SK-N-SH (cell line): ENCODE measurements at regions of chr18 and their contacts with region 1.

Region 1: DNA sequence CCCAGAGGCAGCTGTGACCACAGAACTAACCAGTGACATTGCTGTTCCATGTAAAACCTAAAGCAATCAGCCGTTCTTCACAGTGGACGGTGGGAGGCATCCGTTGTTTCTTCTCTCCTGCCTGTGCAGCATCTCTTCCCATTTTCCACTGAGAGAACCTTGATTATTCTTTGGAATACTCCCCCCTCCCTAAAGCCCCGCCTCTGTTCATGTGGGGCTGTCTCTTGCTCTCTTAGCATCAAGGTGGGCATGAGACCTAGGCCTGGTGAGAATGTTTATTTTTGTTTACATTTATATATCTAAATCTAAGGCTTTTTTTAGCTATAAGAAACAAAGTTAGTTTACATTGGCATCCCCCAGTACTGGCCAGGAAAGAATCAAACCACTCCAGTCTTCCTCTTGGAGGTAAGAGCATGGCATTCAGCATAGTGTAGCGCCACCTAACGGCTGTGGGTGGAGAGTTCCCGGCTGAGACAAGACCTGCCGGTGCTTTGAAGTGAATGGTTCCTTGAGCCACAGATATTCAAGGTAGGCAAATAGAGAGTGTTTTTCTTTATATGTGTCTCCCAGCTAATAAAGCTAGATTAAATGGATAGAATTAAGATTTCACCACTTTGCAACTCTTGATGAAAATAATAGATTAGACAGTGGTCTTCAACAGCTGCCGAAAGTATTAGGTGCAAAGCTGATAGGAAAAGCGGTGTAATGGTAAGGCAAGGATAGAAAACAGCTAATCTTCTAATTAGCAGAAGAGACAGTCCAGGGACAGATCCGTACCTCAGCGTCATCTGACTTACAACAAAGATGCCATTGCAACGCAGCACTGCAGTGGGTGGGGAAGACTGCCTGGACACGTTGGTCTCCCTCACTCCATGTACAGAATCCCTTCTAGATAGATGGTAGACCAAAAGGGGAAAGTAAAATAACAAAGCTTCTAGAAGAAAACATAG is 219.6 kb upstream of the RAB12 start:
- DNase-seq: peak; percentile 72
- H3K4me3 ChIP-seq: peak overlapping the region in 1 of 2 experiments; percentile 47; a peak in 1 of 4 replicates
- H3K27ac ChIP-seq: peak overlapping the region in 1 of 2 experiments; percentile 50; a peak in 1 of 4 replicates
- H3K4me1 ChIP-seq: peaks cover 0 to 6% of the 10 kb centered on the region in 2 experiments; a peak in 1 of 4 replicates
- H3K27me3 ChIP-seq: no peaks in the 10 kb centered on the region
- CTCF ChIP-seq: peak; percentile 81
- EP300 ChIP-seq: no peak
- RAD21 ChIP-seq: peak; percentile 92

Region 2: DNA sequence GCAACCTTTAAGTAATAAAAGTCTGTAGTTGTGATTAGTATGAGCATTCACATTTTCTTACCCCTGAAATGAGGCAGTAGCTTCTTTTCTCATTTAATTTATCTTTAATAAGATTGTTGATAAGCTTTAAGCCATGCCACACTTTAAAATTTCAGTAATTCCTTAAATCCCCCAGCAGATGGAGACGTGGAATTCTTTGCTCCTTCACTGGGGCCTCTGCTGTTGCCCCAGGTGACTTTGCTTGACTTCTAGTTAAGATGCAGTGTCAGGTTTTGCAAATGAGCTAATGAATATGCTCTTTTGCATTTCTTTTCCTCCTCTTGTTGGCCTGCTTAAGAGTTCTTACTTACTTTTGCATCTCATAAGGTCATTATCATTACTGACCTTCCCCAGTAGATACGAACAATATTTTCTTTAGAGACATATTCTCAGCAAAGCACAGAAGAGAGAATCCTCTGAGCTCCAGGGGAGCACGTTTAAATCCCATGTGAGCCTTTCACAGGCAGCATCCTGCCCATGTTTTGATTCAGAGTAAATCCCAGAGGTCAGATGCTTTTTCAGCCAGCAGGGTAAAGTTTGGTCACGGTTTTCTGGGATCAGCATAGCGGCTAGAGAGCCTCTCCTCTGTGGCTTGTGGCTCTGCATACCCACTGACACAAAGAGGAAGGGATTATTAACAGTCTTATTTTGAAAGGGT is 599.7 kb before region 1 on chr18:
- CTCF ChIA-PET with region 1: interaction called, 11 read pairs
- POLR2A ChIA-PET with region 1: no interaction called
- DNase-seq: peak; percentile 33
- H3K4me3 ChIP-seq: no peak overlapping the region; a peak in 1 of 4 replicates
- H3K27ac ChIP-seq: no peak overlapping the region
- H3K4me1 ChIP-seq: peaks cover 0 to 3% of the 10 kb centered on the region in 2 experiments; a peak in 1 of 4 replicates
- H3K27me3 ChIP-seq: no peaks in the 10 kb centered on the region
- CTCF ChIP-seq: peak; percentile 58
- EP300 ChIP-seq: no peak
- RAD21 ChIP-seq: peak; percentile 75

Region 3: DNA sequence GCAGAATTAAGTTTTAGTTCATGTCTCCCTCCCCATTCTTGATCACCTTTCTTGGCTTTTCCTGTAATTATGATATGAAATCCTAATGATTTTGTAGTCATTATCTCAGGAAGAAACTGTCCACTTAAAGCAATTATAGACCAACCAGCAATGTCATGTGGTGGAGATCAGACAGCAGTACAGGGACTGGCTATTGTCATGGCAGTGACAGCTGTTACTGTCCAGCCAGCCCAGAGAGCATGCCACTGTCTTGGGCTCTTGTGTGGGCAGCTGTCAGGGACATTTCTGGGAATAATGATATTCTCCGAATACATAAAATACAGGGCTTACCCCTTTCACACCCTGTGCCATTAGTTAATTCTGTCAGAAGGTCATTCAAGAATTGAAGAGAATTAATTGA is 135.7 kb before region 1 on chr18:
- CTCF ChIA-PET with region 1: no interaction called
- POLR2A ChIA-PET with region 1: no interaction called
- DNase-seq: peak; percentile 74
- H3K4me3 ChIP-seq: no peak overlapping the region
- H3K27ac ChIP-seq: peak overlapping the region in 1 of 2 experiments; percentile 97; a peak in 2 of 4 replicates
- H3K4me1 ChIP-seq: peaks cover 0 to 57% of the 10 kb centered on the region in 2 experiments; a peak in 2 of 4 replicates
- H3K27me3 ChIP-seq: no peaks in the 10 kb centered on the region
- CTCF ChIP-seq: no peak
- EP300 ChIP-seq: peak in 1 of 2 experiments; percentile 100; a peak in 2 of 4 replicates
- RAD21 ChIP-seq: peak; percentile 44; the same call in 1 of the 2 replicates

Region 4: GRCh38 chr18:8375249-8375648 is 14.4 kb before region 1 on chr18:
- CTCF ChIA-PET with region 1: interaction called, 18 read pairs
- POLR2A ChIA-PET with region 1: no interaction called
- DNase-seq: no peak
- H3K4me3 ChIP-seq: no peak overlapping the region
- H3K27ac ChIP-seq: no peak overlapping the region
- H3K4me1 ChIP-seq: no peaks in the 10 kb centered on the region; a peak in 1 of 4 replicates
- H3K27me3 ChIP-seq: no peaks in the 10 kb centered on the region
- CTCF ChIP-seq: no peak
- EP300 ChIP-seq: no peak
- RAD21 ChIP-seq: no peak

Region 5: DNA sequence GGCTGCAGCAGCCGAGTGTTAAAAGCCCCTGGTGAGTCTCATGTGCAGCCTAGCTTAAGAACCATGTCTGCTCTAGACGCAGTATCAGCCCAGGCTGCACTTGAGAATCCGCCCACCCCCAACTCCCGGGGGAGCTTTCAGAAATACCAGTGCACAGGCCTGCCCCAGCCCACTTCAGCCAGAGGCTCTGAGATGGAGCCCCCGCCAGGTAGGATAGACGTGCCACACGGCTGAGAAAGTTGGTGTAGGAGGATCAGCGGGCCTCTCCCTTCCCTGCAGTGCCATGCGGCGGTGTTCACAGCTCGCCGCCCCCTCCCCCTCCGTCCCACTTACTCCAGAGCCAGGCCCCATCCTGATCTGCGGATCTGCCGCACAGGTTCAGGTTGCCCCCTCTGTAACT is 10.6 kb after region 1 on chr18:
- CTCF ChIA-PET with region 1: interaction called, 27 read pairs
- POLR2A ChIA-PET with region 1: no interaction called
- DNase-seq: no peak
- H3K4me3 ChIP-seq: no peak overlapping the region
- H3K27ac ChIP-seq: no peak overlapping the region
- H3K4me1 ChIP-seq: peaks cover 0 to 34% of the 10 kb centered on the region in 2 experiments; a peak in 2 of 4 replicates
- H3K27me3 ChIP-seq: no peaks in the 10 kb centered on the region
- CTCF ChIP-seq: no peak
- EP300 ChIP-seq: no peak
- RAD21 ChIP-seq: no peak

Region 6: DNA sequence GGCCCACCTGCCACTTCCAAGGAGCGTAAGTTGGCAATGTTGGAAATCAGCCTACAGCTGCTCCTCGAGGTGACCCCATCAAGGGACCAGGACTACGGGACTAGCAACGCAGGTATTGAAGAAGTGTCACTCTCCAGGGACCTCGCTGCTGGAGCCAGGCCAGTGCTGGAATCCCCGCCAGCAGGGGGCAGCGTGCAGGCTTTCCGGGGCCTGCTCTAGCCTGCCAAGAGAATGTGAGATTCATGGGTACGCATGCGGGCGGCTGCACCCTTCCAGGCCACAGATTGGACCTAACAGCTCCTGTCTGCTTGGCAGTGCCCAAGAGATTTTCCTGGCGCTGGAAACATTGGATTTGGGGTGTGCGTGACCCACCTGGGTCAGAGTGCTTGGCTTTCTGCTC is 36.7 kb after region 1 on chr18:
- CTCF ChIA-PET with region 1: interaction called, 20 read pairs
- POLR2A ChIA-PET with region 1: no interaction called
- DNase-seq: no peak
- H3K4me3 ChIP-seq: no peak overlapping the region
- H3K27ac ChIP-seq: no peak overlapping the region
- H3K4me1 ChIP-seq: peaks cover 0 to 31% of the 10 kb centered on the region in 2 experiments; a peak in 2 of 4 replicates
- H3K27me3 ChIP-seq: no peaks in the 10 kb centered on the region
- CTCF ChIP-seq: peak; percentile 51
- EP300 ChIP-seq: no peak
- RAD21 ChIP-seq: no peak

Region 7: GRCh38 chr18:8661754-8662569 is 272.3 kb after region 1 on chr18:
- CTCF ChIA-PET with region 1: no interaction called
- POLR2A ChIA-PET with region 1: no interaction called
- DNase-seq: peak; percentile 60
- H3K4me3 ChIP-seq: no peak overlapping the region
- H3K27ac ChIP-seq: no peak overlapping the region
- H3K4me1 ChIP-seq: peaks cover 15 to 19% of the 10 kb centered on the region in 2 experiments; a peak in 2 of 4 replicates
- H3K27me3 ChIP-seq: no peaks in the 10 kb centered on the region
- CTCF ChIP-seq: no peak
- EP300 ChIP-seq: no peak
- RAD21 ChIP-seq: no peak